HEK293 (cell line): ENCODE measurements at regions of chr16 and their contacts with region 1.

Region 1: GRCh38 chr16:67672739-67673662 is 6.4 kb downstream of the C16orf86 start:
- H3K4me3 ChIP-seq: no peak overlapping the region
- H3K27ac ChIP-seq: no peak overlapping the region
- H3K4me1 ChIP-seq: 0 out of 2 replicates have a peak, but pooled peaks cover 3% of the 10 kb centered on the region
- CTCF ChIP-seq: peak; percentile 89

Region 2: DNA sequence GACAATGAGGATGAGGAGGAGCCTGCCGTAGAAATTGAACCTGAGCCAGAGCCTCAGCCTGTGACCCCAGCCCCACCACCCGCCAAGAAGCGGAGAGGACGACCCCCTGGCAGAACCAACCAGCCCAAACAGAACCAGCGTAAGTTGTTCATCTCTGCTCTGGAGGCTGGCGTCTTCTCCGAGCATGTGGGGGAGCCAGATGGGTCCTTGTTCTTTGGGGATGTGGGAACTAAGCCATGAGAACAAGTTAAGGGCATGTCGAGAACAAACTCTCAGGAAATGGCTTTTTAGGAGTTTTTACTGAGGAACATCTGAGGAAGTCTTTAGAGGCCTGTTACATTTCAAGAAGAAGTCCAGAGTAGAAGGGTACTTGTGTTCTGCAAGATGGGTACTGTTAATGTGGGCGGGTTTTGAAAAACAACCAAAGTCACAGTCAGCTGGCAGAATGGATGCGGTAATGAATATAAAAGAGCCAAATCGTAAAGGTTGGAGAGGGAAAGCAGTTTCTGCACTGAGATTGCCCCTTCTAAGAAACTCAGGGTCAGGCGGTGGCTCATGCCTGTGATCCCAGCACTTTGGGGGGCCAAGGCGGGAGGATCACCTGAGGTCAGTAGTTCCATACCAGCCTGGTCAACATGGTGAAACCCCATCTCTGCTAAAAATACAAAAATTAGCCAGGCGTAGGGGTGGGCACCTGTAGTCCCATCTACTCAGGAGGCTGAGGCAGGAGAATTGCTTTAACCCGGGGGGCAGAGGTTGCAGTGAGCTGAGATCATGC is 36.1 kb before region 1 on chr16:
- CTCF ChIA-PET with region 1: no interaction called
- POLR2A ChIA-PET with region 1: no interaction called
- H3K4me3 ChIP-seq: no peak overlapping the region
- H3K27ac ChIP-seq: no peak overlapping the region
- H3K4me1 ChIP-seq: no peaks in the 10 kb centered on the region
- CTCF ChIP-seq: no peak

Region 3: GRCh38 chr16:67683767-67684385 is 10.9 kb after region 1 on chr16:
- CTCF ChIA-PET with region 1: interaction called, 24 read pairs
- POLR2A ChIA-PET with region 1: no interaction called
- H3K4me3 ChIP-seq: no peak overlapping the region
- H3K27ac ChIP-seq: no peak overlapping the region
- H3K4me1 ChIP-seq: no peaks in the 10 kb centered on the region
- CTCF ChIP-seq: no peak

Region 4: DNA sequence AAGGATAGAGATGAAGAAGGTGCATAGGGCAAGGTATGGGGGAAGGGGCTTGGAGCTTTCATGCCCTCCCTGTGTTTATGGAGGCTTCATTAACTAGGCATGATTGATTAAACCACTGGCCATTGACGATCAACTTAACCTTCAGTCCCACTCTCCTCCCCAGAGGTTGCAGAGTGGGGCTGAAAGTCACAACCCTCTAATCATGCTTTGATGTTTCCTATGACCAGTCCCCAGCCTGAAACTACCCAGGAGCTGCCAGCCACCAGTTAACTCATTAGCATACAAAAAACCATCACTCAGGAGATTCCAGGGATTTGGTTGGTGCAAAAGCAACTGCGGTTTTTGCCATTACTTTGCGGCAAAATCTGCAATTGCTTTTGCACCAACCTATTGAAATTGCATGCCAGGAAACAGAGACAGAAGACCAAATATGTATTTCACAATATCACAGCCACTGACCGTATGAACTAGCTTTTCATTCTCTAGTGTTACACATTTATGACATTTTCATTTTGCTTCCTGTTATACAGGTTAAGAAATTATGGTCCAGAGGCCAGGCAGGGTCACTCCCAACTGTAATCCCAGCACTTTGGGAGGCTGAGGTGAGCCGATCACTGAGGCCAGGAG is 40.8 kb after region 1 on chr16:
- CTCF ChIA-PET with region 1: interaction called, 16 read pairs
- POLR2A ChIA-PET with region 1: no interaction called
- H3K4me3 ChIP-seq: no peak overlapping the region
- H3K27ac ChIP-seq: no peak overlapping the region
- H3K4me1 ChIP-seq: no peaks in the 10 kb centered on the region
- CTCF ChIP-seq: no peak

Region 5: DNA sequence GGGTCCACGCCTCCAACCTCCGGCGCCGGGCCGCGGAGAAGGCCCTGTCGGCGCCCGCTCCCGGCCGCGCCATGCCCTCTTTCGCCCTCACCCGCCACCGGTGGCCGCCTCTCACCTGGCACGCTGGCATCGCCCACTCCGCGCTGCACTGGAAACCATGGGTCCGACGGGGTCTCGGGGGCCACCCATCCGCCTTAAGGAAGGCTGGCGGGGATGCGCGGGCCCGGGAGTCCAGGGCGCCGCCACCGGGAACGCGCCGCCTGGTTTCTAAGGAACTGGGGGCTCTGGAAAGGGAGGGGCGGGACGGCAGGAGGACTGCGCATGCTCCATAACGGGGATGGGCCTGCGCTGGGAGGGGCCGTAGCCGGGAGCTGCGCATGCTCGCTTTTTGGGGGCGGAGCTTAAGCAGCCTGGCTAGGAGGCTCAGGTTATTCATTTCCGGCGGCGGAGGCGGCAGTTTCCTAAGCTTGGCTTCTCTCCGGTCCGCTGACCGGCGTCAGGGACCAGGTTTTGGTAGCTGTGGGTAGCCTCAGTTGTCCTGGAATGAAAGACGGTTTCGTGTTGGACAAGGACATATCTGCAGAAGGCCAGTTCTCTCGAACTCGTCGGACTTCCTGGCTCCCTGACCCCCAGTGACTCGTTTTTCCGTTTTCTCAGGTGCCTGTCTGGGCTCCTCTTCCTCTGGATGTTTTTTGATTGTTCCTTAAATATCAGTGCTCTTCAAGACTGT is 46.2 kb after region 1 on chr16 and contains the start of gene GFOD2:
- CTCF ChIA-PET with region 1: interaction called, 16 read pairs
- POLR2A ChIA-PET with region 1: interaction called, 4 read pairs
- H3K4me3 ChIP-seq: peak within 1 kb of the TSS; percentile 69
- H3K27ac ChIP-seq: peak within 1 kb of the TSS; percentile 43; the same call in 1 of the 2 replicates
- H3K4me1 ChIP-seq: no peaks in the 10 kb centered on the region; the same call in 1 of the 2 replicates
- CTCF ChIP-seq: peak; percentile 64; the same call in 1 of the 2 replicates

Region 6: GRCh38 chr16:67862623-67863583 is 189.9 kb after region 1 on chr16:
- CTCF ChIA-PET with region 1: interaction called, 13 read pairs
- POLR2A ChIA-PET with region 1: no interaction called
- H3K4me3 ChIP-seq: no peak overlapping the region
- H3K27ac ChIP-seq: peak overlapping the region; percentile 40; the same call in 1 of the 2 replicates
- H3K4me1 ChIP-seq: peaks cover 3% of the 10 kb centered on the region; the same call in 1 of the 2 replicates
- CTCF ChIP-seq: no peak

Region 7: GRCh38 chr16:67928561-67929364 is 255.8 kb after region 1 on chr16:
- CTCF ChIA-PET with region 1: interaction called, 15 read pairs
- POLR2A ChIA-PET with region 1: interaction called, 4 read pairs
- H3K4me3 ChIP-seq: no peak overlapping the region
- H3K27ac ChIP-seq: no peak overlapping the region
- H3K4me1 ChIP-seq: peaks cover 10% of the 10 kb centered on the region; the same call in 1 of the 2 replicates
- CTCF ChIP-seq: peak; percentile 92